ENCODE measurements at regions of chr7 and their contacts with region 1.

Region 1: GRCh38 chr7:121107923-121108498 is 119.5 kb downstream of the CPED1 start:
- DNase-seq: peak; percentile 19
- H3K4me3 ChIP-seq: no peak overlapping the region
- CTCF ChIP-seq: peak; percentile 43

Region 2: GRCh38 chr7:120996333-120996987 is 111.6 kb before region 1 on chr7:
- CTCF ChIA-PET with region 1: interaction called, 97 read pairs
- POLR2A ChIA-PET with region 1: no interaction called
- DNase-seq: peak; percentile 72
- H3K4me3 ChIP-seq: no peak overlapping the region
- CTCF ChIP-seq: no peak

Region 3: GRCh38 chr7:121337398-121337797 is 229.4 kb after region 1 on chr7:
- CTCF ChIA-PET with region 1: interaction called, 19 read pairs
- POLR2A ChIA-PET with region 1: no interaction called
- DNase-seq: no peak
- H3K4me3 ChIP-seq: no peak overlapping the region
- CTCF ChIP-seq: peak; percentile 28

Measured in AG04449 (cell line).